CD8-positive, alpha-beta T cell (primary cell): ENCODE measurements at regions of chr5 and their contacts with region 1.

Region 1: DNA sequence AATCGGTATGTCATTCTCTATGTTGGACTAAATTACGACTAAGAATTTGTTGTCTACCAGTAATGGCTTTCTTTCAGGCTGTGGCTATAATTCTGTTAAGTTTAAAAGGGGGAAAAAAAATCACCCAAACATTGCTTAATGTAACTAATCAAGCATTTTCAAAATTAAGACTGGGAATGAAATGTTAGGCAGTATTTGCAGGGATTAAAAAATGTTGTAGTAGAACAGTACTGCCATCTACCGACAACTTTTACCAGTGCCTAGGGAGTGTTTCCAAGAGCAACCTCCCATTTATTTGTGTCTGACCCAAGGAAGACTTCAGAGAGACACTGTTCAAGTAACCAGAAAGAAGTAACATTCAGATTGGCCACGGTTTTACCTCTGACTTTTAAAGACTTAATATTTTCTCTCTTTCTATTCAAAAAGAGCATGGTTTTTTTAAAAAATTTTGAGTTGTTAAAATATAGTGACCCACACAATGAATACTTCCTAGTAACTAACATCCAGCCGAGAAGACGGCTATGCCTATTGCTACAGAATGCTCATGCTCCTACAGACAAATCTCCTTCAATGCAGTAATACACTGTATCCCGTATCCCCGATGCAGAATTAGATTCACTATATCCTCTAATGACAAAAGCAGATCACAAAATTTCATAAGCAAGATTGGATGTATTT is 92.4 kb downstream of the ARL15 start:
- DNase-seq: peak in 2 of 9 experiments; percentile 44 to 53
- ATAC-seq: no peak
- H3K4me3 ChIP-seq: no peak overlapping the region
- H3K4me3 Mint-ChIP-seq: no peak overlapping the region
- H3K27ac ChIP-seq: no peak overlapping the region
- H3K27ac Mint-ChIP-seq: no peak overlapping the region
- H3K4me1 ChIP-seq: no peaks in the 10 kb centered on the region
- H3K4me1 Mint-ChIP-seq: peaks cover 15% of the 10 kb centered on the region
- H3K27me3 ChIP-seq: no peaks in the 10 kb centered on the region
- H3K27me3 Mint-ChIP-seq: no peaks in the 10 kb centered on the region
- CTCF ChIP-seq: peak; percentile 48

Region 2: GRCh38 chr5:53095931-53096525 is 1121.9 kb before region 1 on chr5:
- CTCF ChIA-PET with region 1: no interaction called
- POLR2A ChIA-PET with region 1: no interaction called
- intact Hi-C with region 1: loop called in 1 of 2 experiments (anchors 1 kb)
- DNase-seq: peak; percentile 43 to 76 (median 68)
- ATAC-seq: peak; percentile 93
- H3K4me3 ChIP-seq: no peak overlapping the region
- H3K4me3 Mint-ChIP-seq: no peak overlapping the region
- H3K27ac ChIP-seq: no peak overlapping the region
- H3K27ac Mint-ChIP-seq: no peak overlapping the region
- H3K4me1 ChIP-seq: no peaks in the 10 kb centered on the region
- H3K4me1 Mint-ChIP-seq: no peaks in the 10 kb centered on the region
- H3K27me3 ChIP-seq: no peaks in the 10 kb centered on the region
- H3K27me3 Mint-ChIP-seq: no peaks in the 10 kb centered on the region
- CTCF ChIP-seq: peak; percentile 81

Region 3: GRCh38 chr5:53170748-53171349 is 1047.1 kb before region 1 on chr5:
- CTCF ChIA-PET with region 1: interaction called, 3 read pairs
- POLR2A ChIA-PET with region 1: no interaction called
- intact Hi-C with region 1: loop called in 1 of 2 experiments (anchors 2 kb)
- DNase-seq: peak in 2 of 9 experiments; percentile 9 to 16
- ATAC-seq: no peak
- H3K4me3 ChIP-seq: no peak overlapping the region
- H3K4me3 Mint-ChIP-seq: no peak overlapping the region
- H3K27ac ChIP-seq: no peak overlapping the region
- H3K27ac Mint-ChIP-seq: no peak overlapping the region
- H3K4me1 ChIP-seq: no peaks in the 10 kb centered on the region
- H3K4me1 Mint-ChIP-seq: no peaks in the 10 kb centered on the region
- H3K27me3 ChIP-seq: peaks cover 0 to 4% of the 10 kb centered on the region in 2 experiments
- H3K27me3 Mint-ChIP-seq: peaks cover 11% of the 10 kb centered on the region
- CTCF ChIP-seq: no peak

Region 4: GRCh38 chr5:53481887-53482716 is 735.9 kb before region 1 on chr5:
- CTCF ChIA-PET with region 1: no interaction called
- POLR2A ChIA-PET with region 1: interaction called, 3 read pairs
- intact Hi-C with region 1: loop called in 1 of 2 experiments (anchors 1 kb)
- DNase-seq: peak in 7 of 9 experiments; percentile 35 to 72 (median 53)
- ATAC-seq: peak; percentile 68
- H3K4me3 ChIP-seq: peak overlapping the region; percentile 48 to 60
- H3K4me3 Mint-ChIP-seq: peak overlapping the region; percentile 86
- H3K27ac ChIP-seq: no peak overlapping the region
- H3K27ac Mint-ChIP-seq: peak overlapping the region; percentile 43
- H3K4me1 ChIP-seq: peaks cover 12% of the 10 kb centered on the region
- H3K4me1 Mint-ChIP-seq: peaks cover 39% of the 10 kb centered on the region
- H3K27me3 ChIP-seq: peaks cover 13 to 14% of the 10 kb centered on the region in 2 experiments
- H3K27me3 Mint-ChIP-seq: peaks cover 47% of the 10 kb centered on the region
- CTCF ChIP-seq: peak; percentile 29

Region 5: GRCh38 chr5:54206580-54207229 is 11.3 kb before region 1 on chr5:
- CTCF ChIA-PET with region 1: no interaction called
- POLR2A ChIA-PET with region 1: no interaction called
- intact Hi-C with region 1: no loop called
- DNase-seq: no peak
- ATAC-seq: no peak
- H3K4me3 ChIP-seq: no peak overlapping the region
- H3K4me3 Mint-ChIP-seq: no peak overlapping the region
- H3K27ac ChIP-seq: no peak overlapping the region
- H3K27ac Mint-ChIP-seq: no peak overlapping the region
- H3K4me1 ChIP-seq: no peaks in the 10 kb centered on the region
- H3K4me1 Mint-ChIP-seq: peaks cover 14% of the 10 kb centered on the region
- H3K27me3 ChIP-seq: no peaks in the 10 kb centered on the region
- H3K27me3 Mint-ChIP-seq: no peaks in the 10 kb centered on the region
- CTCF ChIP-seq: no peak